ENCODE measurements at regions of chr19 and their contacts with region 1.

Region 1: GRCh38 chr19:6801485-6802086 is 29.1 kb downstream of the VAV1 start:
- DNase-seq: peak; percentile 53 to 87
- ATAC-seq: peak; percentile 78 to 90
- H3K4me3 ChIP-seq: peak overlapping the region; percentile 44
- H3K27ac ChIP-seq: peak overlapping the region; percentile 92 to 100
- H3K4me1 ChIP-seq: peaks cover 24% of the 10 kb centered on the region
- CTCF ChIP-seq: no peak
- EP300 ChIP-seq: no peak
- POLR2A ChIP-seq: peak; percentile 8; the same call in 1 of the 2 replicates
- RAD21 ChIP-seq: no peak

Region 2: DNA sequence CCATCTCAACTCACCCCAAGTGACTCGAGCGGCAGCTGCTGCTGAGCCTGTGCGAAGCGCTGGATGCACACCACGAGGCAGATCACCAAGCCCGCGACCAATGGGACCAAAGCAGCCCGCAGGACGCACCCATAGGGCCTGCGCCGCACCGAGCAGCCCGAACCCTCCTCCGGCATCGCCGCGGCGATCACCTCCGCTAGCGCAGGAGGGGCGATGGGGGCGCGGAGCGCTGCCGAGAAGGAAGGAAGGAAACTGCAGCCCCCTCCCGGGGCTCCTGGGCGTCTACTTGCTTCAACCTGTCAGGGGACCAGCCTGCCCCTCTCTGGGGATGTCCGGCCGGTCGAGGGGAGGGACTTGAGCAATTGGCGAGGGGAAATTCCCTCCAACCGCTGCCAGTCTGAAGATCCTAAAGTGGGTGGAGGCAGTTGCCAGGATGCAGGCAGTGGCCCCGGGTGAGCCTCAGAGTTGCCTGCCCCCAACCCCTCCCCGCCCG is 210.7 kb before region 1 on chr19 and contains the start of gene CD70:
- CTCF ChIA-PET with region 1: no interaction called
- POLR2A ChIA-PET with region 1: no interaction called
- DNase-seq: peak; percentile 55 to 69
- ATAC-seq: peak; percentile 90 to 96
- H3K4me3 ChIP-seq: peak within 1 kb of the TSS; percentile 51
- H3K27ac ChIP-seq: peak within 1 kb of the TSS; percentile 62 to 87
- H3K4me1 ChIP-seq: peaks cover 4% of the 10 kb centered on the region; the same call in 2 of the 3 replicates
- CTCF ChIP-seq: no peak
- EP300 ChIP-seq: no peak
- POLR2A ChIP-seq: no peak
- RAD21 ChIP-seq: no peak
- polyA plus RNA-seq, gene CD70: 7.7 and 10.0 TPM in 2 replicates

Region 3: DNA sequence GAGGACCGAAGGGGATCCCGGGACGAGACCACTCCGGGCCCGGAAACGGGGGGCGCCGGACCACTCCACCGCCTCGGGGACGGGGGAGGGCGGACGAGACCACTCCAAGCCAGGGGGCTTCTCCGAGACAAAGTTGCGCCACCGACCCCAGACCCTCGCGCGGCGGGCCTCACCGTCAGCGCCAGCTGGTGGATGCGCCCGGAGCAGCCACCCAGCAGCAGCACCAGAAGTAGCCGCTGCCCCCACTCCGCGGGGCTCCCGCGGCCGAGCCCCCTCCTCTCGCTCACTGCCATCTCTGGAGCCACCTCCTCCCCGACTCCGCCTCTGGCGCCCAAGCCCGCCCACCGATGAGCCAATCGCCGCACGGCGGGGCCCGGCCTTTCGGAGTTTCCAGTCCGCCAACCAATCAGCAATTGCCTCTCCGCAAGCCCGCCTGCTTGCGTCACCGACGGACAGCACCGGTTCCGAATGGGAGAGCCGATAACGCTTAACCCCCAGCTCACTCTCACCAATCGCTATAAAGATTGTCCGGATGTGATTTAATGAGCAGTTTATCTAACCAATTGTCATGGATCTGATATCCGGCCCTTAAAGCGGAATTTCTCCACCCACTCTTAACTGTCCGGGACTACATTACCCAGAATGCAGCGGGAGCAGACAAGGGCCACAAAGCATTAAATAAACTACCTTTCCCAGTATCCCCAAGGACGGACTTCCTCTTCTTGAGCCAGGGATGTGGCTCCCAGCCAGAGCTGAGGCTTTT is 64.1 kb before region 1 on chr19 and contains the start of gene GPR108:
- CTCF ChIA-PET with region 1: interaction called, 10 read pairs
- POLR2A ChIA-PET with region 1: interaction called, 10 read pairs
- DNase-seq: peak; percentile 94 to 99
- ATAC-seq: peak; percentile 62 to 79
- H3K4me3 ChIP-seq: peak within 1 kb of the TSS; percentile 93
- H3K27ac ChIP-seq: peak within 1 kb of the TSS; percentile 97 to 98
- H3K4me1 ChIP-seq: peaks cover 29% of the 10 kb centered on the region
- CTCF ChIP-seq: no peak
- EP300 ChIP-seq: no peak
- POLR2A ChIP-seq: no peak; the same call in 1 of the 2 replicates
- RAD21 ChIP-seq: no peak
- polyA plus RNA-seq, gene GPR108: 50.2 and 69.4 TPM in 2 replicates

Region 4: DNA sequence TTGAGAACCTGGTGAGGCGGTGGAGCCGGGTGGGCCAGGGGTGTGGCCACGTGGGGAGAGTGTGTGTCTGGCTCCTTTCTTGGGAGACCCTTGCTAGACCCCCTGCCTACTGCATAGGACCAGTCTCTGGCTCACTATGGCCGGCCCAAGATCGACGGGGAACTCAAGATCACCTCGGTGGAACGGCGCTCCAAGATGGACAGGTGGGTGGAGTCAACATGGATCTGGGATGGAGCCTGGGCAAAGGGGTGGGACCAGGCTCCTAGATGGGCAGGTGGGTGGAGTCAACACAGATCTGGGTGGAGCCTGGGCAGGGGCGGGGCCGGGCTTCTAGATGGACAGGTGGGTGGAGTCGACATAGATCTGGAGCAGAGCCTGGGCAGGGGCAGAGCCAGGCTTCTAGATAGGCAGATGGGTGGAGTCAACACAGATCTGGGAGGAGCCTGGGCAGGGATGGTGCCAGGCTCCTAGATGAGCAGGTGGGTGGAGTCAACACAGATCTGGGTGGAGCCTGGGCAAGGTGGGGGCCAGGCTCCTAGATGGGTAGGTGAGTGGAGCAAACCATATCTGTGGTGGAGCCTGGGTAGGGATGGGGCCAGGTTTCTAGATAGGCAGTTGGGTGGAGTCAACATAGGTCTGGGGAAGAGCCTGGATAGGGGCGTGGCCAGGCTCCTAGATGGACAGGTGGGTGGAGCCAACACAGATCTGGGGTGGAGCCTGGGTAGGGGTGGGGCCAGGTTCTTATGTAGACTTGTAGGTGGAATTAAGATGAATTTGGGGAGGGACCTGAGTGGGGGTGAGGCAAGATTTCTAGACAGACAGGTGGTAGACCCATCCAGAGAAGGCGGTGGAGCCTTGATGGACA is 27.3 kb after region 1 on chr19:
- CTCF ChIA-PET with region 1: no interaction called
- POLR2A ChIA-PET with region 1: interaction called, 19 read pairs
- DNase-seq: peak; percentile 78 to 95
- ATAC-seq: peak; percentile 88 to 92
- H3K4me3 ChIP-seq: peak overlapping the region; percentile 63
- H3K27ac ChIP-seq: peak overlapping the region; percentile 83 to 87
- H3K4me1 ChIP-seq: peaks cover 7% of the 10 kb centered on the region; the same call in 2 of the 3 replicates
- CTCF ChIP-seq: no peak
- EP300 ChIP-seq: no peak
- POLR2A ChIP-seq: peak; percentile 4; the same call in 1 of the 2 replicates
- RAD21 ChIP-seq: no peak

Region 5: GRCh38 chr19:6849876-6850275 is 48.3 kb after region 1 on chr19:
- CTCF ChIA-PET with region 1: no interaction called
- POLR2A ChIA-PET with region 1: no interaction called
- DNase-seq: no peak
- ATAC-seq: no peak
- H3K4me3 ChIP-seq: no peak overlapping the region
- H3K27ac ChIP-seq: no peak overlapping the region
- H3K4me1 ChIP-seq: no peaks in the 10 kb centered on the region
- CTCF ChIP-seq: no peak
- EP300 ChIP-seq: no peak
- POLR2A ChIP-seq: no peak
- RAD21 ChIP-seq: no peak

Region 6: GRCh38 chr19:6952956-6953355 is 151.4 kb after region 1 on chr19:
- CTCF ChIA-PET with region 1: no interaction called
- POLR2A ChIA-PET with region 1: no interaction called
- DNase-seq: no peak
- ATAC-seq: no peak
- H3K4me3 ChIP-seq: no peak overlapping the region
- H3K27ac ChIP-seq: no peak overlapping the region
- H3K4me1 ChIP-seq: peaks cover 2% of the 10 kb centered on the region; the same call in 1 of the 3 replicates
- CTCF ChIP-seq: no peak
- EP300 ChIP-seq: no peak
- POLR2A ChIP-seq: no peak
- RAD21 ChIP-seq: no peak

Measured in A549 (cell line).